ENCODE measurements at regions of chr11 and their contacts with region 1.

Region 1: GRCh38 chr11:6481012-6481923 is at the starts of genes ARFIP2 and TIMM10B:
- DNase-seq: peak; percentile 97
- H3K4me3 Mint-ChIP-seq: peak within 1 kb of the TSS; percentile 94
- H3K27ac Mint-ChIP-seq: peak within 1 kb of the TSS; percentile 94
- H3K4me1 Mint-ChIP-seq: peaks cover 40% of the 10 kb centered on the region
- H3K27me3 Mint-ChIP-seq: no peaks in the 10 kb centered on the region
- total RNA-seq, gene ARFIP2: 51.5 and 53.8 TPM in 2 replicates
- total RNA-seq, gene TIMM10B: 38.8 and 42.7 TPM in 2 replicates

Region 2: DNA sequence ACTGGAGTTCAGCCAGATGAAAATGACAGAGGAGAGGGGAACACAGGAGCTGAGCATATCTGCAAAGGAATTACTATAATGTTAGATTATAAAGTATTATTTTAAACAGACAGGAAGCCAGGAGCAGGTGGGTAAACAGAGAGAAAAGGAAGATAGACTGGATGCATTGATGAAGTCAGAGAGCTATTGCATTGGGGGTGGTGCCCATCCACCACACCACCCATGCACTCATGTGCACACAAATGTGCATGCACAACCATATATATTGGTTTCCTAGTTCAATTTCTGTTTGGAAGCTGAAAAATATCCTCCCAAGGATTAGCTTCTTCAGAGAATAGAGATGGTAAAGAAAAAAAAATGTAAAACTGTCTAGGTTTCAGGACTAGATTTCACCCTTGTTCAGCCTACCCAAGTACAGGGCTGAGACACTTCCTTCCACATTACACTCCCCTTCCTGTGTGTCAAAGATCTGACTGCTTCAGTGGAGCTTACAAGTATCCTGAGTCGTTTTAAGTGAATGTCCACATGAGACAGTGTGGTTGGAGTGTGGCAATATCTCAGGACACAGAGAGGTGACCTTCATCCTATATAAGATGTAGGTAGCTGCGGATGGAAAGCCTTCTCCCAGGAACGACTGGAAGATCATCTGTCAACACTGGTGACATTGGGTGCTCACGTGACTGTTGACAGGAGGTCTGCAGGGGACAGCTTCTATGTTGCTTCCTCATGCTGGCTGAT is 103.2 kb before region 1 on chr11:
- intact Hi-C with region 1: loop called (anchors 1 kb)
- DNase-seq: no peak
- H3K4me3 Mint-ChIP-seq: peak overlapping the region; percentile 19
- H3K27ac Mint-ChIP-seq: peak overlapping the region; percentile 44
- H3K4me1 Mint-ChIP-seq: peaks cover 33% of the 10 kb centered on the region
- H3K27me3 Mint-ChIP-seq: peaks cover 4% of the 10 kb centered on the region

Region 3: DNA sequence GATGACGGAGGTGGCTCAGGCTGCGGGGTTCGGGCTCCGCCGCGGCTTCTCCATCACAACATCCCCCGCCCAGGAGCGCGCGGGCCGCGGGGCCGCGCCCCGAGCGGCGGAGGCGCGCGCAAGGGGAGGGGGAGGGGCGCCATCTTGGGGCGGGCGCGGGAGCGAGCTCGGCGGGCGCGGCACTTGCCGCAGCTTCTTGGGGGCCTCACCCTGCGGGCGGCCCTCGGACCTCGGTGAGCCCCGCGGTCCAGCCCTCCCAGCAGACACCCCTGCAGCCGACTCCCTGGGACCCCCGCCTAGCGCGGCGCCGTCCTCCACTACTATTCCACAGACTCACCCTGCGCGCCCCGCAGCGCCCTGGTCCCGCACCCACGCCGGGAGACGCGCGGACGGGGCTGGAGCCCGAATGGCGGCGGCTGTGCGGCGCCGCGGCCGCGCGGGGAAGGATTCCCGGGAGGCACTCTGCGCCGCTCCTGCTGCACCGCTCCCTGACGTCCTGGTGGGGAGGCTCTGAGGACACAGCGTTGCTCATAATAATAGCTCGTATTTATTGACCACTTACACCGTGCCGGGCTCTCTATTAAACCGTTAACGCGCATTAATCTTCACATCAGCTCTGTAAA is 62.1 kb before region 1 on chr11 and contains the start of gene APBB1:
- intact Hi-C with region 1: loop called (anchors 1 kb)
- DNase-seq: peak; percentile 63
- H3K4me3 Mint-ChIP-seq: peak within 1 kb of the TSS; percentile 77
- H3K27ac Mint-ChIP-seq: no peak within 1 kb of the TSS
- H3K4me1 Mint-ChIP-seq: no peaks in the 10 kb centered on the region
- H3K27me3 Mint-ChIP-seq: peaks cover 32% of the 10 kb centered on the region
- total RNA-seq, gene APBB1: 16.5 and 16.8 TPM in 2 replicates

Region 4: GRCh38 chr11:6431861-6432260 is 49.4 kb before region 1 on chr11:
- intact Hi-C with region 1: no loop called
- DNase-seq: no peak
- H3K4me3 Mint-ChIP-seq: no peak overlapping the region
- H3K27ac Mint-ChIP-seq: no peak overlapping the region
- H3K4me1 Mint-ChIP-seq: peaks cover 6% of the 10 kb centered on the region
- H3K27me3 Mint-ChIP-seq: peaks cover 7% of the 10 kb centered on the region

Region 5: DNA sequence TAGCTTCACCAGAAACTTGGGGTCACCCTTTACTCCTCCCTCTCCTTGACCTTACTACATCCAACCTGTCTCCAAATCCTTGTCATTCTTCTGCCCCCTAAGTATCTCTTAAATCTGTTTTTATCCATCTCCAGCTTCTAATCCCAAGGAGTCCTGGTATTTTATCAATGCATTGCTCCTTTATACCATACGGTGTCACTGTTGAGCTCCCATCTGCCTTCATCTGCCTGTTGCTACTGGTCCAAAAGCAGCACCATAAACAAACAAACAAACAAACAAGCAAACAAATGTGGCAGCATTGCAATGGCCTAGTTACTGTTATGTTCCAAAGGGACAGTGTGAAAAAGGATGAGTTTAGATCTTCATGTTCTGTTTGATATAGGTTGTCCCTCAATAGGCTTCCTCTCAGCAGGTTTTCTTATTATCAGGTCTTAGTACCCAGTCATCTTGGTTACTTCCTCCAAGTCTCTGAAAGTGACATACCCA is 50.0 kb after region 1 on chr11:
- intact Hi-C with region 1: loop called (anchors 2 kb)
- DNase-seq: peak; percentile 16
- H3K4me3 Mint-ChIP-seq: no peak overlapping the region
- H3K27ac Mint-ChIP-seq: no peak overlapping the region
- H3K4me1 Mint-ChIP-seq: peaks cover 12% of the 10 kb centered on the region
- H3K27me3 Mint-ChIP-seq: no peaks in the 10 kb centered on the region

Region 6: DNA sequence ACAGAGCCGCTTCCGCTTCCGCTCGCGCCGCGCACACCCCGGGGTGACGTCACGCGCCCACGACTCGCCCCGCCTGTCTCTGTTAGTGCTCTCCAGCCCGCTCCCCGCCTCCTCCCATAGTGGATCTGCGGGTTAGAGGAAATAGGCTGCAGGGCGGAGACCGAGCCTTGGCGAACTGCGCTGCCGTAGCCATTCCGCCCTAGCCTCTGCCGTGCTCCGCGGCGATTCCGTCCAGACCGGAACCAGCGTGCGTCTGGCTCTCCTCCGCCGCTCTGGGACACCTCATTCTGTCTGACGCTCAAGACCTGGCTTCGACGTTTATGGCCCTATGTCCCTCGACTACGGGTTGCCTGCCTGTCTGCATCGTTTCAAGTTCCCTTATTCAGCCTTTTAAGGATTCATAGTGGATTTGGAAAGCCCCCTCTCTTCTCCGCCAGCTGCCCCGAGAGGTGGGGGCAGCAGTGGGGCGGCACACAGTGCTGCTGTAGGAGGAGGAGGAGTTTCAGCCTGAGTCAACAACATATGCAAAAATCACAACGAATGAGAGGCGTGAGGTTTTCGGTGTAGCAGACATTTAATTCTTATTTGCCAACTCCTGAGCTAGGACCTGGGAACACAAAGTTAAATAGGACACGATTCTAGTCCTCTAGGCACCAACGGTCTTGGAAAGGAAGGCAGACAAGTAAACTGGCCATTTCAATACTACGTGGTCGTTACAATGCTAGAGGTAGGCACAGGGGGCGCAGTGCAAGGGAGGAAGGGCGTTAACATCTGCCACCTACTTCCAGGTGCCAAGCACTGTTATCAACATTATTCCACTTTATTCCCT is 131.2 kb after region 1 on chr11 and contains the start of gene TAF10:
- intact Hi-C with region 1: loop called (anchors 1 kb)
- DNase-seq: peak; percentile 95
- H3K4me3 Mint-ChIP-seq: peak within 1 kb of the TSS; percentile 93
- H3K27ac Mint-ChIP-seq: peak within 1 kb of the TSS; percentile 87
- H3K4me1 Mint-ChIP-seq: peaks cover 29% of the 10 kb centered on the region
- H3K27me3 Mint-ChIP-seq: no peaks in the 10 kb centered on the region
- total RNA-seq, gene TAF10: 155 and 166 TPM in 2 replicates

Measured in activated T-helper 1 cell treated with anti-CD3 and anti-CD28 coated beads, Interleukin-12 subunit alpha, Interleukin-12 subunit beta, Interleukin-2, Interleukin-4 antibody, amounts not matched to agents 30 ng/mL and 10 ng/mL and 1 ng/mL, durations not matched to agents 14 hours and 24 hours and 36 hours (primary cell).